BJ (cell line): ENCODE measurements at regions of chr18 and their contacts with region 1.

Region 1: DNA sequence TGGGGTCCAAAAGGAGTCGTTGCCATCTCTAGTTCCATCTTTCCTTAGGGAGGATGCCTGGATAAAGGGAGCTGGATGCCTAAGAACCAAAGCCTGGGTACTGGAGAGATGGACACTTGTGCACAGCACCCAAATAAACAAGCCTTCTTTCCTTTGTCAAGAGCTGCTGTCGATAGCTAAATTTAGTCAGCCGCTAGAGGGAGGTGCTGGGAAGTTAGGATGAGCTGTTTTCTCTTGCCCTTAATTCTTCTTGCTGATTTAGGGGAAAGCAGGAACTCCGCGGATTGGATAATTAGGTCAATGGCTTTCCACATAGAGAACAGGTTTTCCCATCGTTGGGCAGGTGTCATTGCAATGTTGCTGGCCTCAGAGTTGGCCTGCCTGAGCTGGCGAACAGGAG is 30.9 kb upstream of the SERPINB12 start:
- DNase-seq: no peak
- H3K4me3 ChIP-seq: no peak overlapping the region
- H3K27me3 ChIP-seq: no peaks in the 10 kb centered on the region
- CTCF ChIP-seq: peak; percentile 79

Region 2: DNA sequence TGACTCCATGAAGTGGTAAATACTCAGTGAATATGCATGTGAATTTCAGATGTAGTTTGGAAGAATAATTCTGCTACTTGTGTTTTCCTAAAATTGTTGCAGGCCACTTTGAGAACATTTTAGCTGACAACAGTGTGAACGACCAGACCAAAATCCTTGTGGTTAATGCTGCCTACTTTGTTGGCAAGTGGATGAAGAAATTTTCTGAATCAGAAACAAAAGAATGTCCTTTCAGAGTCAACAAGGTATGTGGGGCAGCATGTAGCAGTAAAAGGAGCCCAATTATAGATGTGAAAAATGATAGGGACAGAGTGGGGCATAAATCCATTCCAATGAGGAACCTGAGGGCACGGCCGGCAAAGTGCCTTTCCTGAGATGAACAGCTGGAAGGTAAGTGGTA is 18.4 kb before region 1 on chr18:
- CTCF ChIA-PET with region 1: interaction called, 23 read pairs
- POLR2A ChIA-PET with region 1: no interaction called
- DNase-seq: no peak
- H3K4me3 ChIP-seq: no peak overlapping the region
- H3K27me3 ChIP-seq: peaks cover 3% of the 10 kb centered on the region; the same call in 1 of the 2 replicates
- CTCF ChIP-seq: no peak

Region 3: GRCh38 chr18:63523660-63524059 is 12.4 kb after region 1 on chr18:
- CTCF ChIA-PET with region 1: interaction called, 78 read pairs
- POLR2A ChIA-PET with region 1: no interaction called
- DNase-seq: no peak
- H3K4me3 ChIP-seq: no peak overlapping the region
- H3K27me3 ChIP-seq: no peaks in the 10 kb centered on the region
- CTCF ChIP-seq: no peak

Region 4: GRCh38 chr18:63848159-63848558 is 336.9 kb after region 1 on chr18:
- CTCF ChIA-PET with region 1: interaction called, 99 read pairs
- POLR2A ChIA-PET with region 1: no interaction called
- DNase-seq: no peak
- H3K4me3 ChIP-seq: no peak overlapping the region
- H3K27me3 ChIP-seq: no peaks in the 10 kb centered on the region
- CTCF ChIP-seq: peak; percentile 73